Motor neuron (in vitro differentiated cells): ENCODE measurements at regions of chr1 and their contacts with region 1.

Region 1: DNA sequence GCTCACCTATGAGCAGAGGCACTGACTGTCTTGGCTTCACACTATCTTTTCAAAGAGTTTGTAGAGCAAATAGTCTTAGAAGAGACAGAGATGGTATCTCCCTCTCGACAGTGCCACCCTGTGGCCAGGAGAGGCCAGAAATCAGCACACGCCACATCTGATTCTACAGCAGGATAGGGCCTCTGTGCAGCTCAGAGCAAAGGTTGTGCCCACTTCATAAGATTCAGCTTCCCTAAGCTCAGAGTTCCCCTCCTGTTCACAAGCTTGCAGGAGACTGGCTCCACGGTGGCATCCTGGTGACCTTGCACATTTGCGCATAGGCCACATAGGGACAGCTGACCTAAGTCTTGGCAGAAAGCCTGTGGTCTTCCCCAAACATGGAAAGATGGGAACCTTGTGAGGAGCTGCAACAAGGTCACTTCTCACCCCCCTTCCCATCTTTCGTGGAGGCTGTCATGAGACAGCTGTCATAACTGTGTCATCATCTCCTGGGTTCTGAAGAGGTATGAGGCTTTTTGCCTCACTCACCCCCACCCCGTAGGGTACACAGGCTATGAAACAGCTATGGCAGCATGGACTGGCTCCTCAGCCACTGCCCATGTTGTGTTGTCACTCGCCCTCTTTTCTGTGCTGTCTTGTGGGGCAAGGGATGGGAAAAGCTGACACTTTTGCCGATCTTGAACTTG is 3.0 kb downstream of the ITLN2 start:
- ATAC-seq: peak in 6 of 8 experiments; percentile 30 to 95 (median 83)
- H3K4me3 ChIP-seq: no peak overlapping the region
- H3K27ac ChIP-seq: no peak overlapping the region
- H3K4me1 ChIP-seq: peaks cover 0 to 2% of the 10 kb centered on the region in 2 donors

Region 2: DNA sequence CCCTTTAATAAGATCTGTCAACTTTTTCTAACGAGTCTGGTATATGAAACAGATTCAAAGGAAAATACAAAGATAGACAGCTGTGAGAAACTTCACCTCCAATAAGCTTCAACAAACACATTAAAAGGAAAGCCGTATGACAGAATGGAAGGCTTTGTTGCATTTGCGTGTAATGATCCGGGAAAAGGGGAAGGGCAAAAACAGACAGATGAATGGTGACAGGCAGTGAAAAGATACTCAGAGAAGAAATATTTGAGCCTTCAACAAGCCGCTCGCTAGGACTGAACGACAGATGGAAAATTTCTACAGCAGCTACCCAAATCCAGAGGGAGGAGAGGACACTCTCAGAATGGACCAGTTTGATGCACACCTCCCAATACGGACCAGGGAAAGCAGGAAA is 623.4 kb before region 1 on chr1:
- in situ Hi-C with region 1: no loop called
- ATAC-seq: peak in 3 of 8 experiments; percentile 75 to 88 (median 81)
- H3K4me3 ChIP-seq: no peak overlapping the region
- H3K27ac ChIP-seq: no peak overlapping the region
- H3K4me1 ChIP-seq: peaks cover 0 to 25% of the 10 kb centered on the region in 2 donors

Region 3: DNA sequence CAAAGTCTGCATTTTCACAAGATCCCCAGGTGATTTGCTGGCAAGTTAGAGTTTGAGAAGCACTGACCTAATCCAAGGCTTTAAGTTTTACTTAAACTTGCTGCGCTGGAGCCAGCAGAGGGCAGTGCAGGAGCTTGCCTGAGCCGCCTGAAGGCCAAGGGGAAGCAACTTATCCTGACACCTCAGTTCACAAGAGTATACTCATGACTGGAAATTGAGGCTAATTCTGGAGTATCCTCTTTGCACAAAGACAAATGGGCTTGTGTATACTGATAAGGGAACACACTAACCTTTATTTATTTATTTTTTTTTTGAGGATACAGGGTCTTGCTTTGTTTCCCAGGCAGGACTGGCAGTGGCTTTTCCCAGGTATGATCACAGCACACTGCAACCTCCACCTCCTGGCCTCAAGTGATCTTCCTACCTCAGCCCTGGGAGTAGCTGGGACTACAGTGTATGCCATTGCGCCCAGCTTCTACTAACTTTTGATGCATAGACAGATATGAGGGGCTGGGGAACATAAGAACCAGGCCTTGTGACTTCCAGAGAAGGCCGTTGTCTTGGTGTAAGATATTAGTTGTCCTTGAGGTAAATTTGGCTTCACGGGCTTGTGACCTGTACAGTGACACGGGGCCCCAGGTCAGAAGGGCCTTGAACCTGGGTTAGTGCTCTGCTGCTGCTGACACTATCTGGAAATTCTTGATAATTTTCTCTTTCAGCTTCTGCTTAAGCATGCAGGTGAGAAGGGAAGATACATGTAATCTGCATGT is 275.8 kb before region 1 on chr1:
- in situ Hi-C with region 1: loop called in 1 of 9 experiments (anchors 25 kb)
- ATAC-seq: peak; percentile 57 to 90 (median 76)
- H3K4me3 ChIP-seq: no peak overlapping the region
- H3K27ac ChIP-seq: no peak overlapping the region
- H3K4me1 ChIP-seq: no peaks in the 10 kb centered on the region

Region 4: GRCh38 chr1:160830321-160831153 is 121.0 kb before region 1 on chr1:
- in situ Hi-C with region 1: loop called in 3 of 9 experiments (anchors 10 to 25 kb)
- ATAC-seq: peak in 5 of 8 experiments; percentile 39 to 92 (median 83)
- H3K4me3 ChIP-seq: no peak overlapping the region
- H3K27ac ChIP-seq: no peak overlapping the region
- H3K4me1 ChIP-seq: no peaks in the 10 kb centered on the region